ENCODE measurements at regions of chr7 and their contacts with region 1.

Region 1: DNA sequence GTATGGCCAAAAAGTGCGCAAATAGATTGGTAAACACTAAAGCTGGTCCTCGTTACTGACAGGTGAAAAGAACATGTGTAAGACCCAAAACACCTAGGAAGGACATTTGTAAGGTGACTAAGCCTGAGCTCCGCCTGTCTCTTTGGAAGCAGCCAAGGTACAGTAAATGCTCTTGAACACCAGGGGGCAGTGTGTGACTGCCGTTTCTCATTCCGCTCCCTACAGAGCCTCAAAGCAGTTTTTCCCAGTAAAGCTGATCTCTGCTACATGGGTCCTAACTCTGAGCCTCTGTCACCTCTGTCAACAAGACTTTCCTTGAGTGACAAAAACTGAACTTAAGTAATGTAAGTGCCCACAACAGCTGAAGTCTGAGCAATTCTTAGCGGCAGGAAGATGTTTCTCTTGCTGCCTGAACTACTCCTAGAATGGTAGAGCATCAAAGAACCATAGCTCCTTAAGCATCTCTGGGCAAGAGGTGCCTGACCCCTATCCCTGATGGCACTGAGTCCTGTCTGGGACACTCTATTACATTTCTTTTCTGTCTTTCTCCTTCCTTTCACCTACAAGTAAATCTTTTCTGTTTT is 238.0 kb upstream of the INHBA start:
- DNase-seq: peak; percentile 79
- ATAC-seq: peak; percentile 65
- H3K4me3 ChIP-seq: no peak overlapping the region
- H3K27ac ChIP-seq: no peak overlapping the region
- H3K4me1 ChIP-seq: peaks cover 13% of the 10 kb centered on the region
- H3K27me3 ChIP-seq: no peaks in the 10 kb centered on the region
- CTCF ChIP-seq: peak; percentile 87
- POLR2A ChIP-seq: no peak
- RAD21 ChIP-seq: peak; percentile 87

Region 2: DNA sequence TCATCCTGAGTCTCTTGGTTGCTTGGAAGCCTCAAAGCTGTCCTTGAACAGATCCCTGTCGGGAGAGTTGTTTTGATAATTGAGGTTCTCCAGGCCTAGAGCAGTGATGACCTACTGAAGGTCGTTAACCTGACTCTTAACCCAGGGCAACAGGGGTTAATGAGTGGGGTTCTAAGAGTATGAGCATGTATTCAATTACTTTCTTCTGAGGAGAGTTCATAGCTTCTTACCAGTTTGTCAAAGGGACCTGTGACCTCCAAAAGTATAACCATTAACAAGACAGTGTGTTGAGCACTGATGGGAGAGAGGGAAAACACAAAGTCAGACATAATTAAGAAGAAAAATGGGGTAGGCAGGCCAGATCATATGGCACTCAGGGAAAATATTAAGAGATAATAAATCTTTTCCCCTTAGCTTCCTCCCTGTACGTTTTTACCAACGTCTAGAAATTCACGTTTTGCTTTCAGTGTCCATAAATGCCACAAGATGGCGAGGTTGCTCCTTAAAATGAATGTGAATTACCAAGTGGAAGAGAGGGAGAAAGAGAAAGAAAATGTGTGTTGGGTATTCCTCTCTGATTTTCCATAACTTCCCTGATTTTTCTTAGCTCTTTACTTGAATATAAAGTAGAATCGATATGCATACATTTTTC is 1708.5 kb before region 1 on chr7:
- CTCF ChIA-PET with region 1: no interaction called
- POLR2A ChIA-PET with region 1: no interaction called
- dilution Hi-C with region 1: no loop called
- in situ Hi-C with region 1: no loop called
- intact Hi-C with region 1: loop called (anchors 1 kb)
- DNase-seq: peak; percentile 80
- ATAC-seq: peak; percentile 89
- H3K4me3 ChIP-seq: no peak overlapping the region
- H3K27ac ChIP-seq: no peak overlapping the region
- H3K4me1 ChIP-seq: peaks cover 4% of the 10 kb centered on the region; the same call in 1 of the 2 replicates
- H3K27me3 ChIP-seq: no peaks in the 10 kb centered on the region
- CTCF ChIP-seq: peak; percentile 81
- POLR2A ChIP-seq: no peak
- RAD21 ChIP-seq: peak; percentile 84

Region 3: GRCh38 chr7:41755096-41755495 is 185.8 kb before region 1 on chr7:
- CTCF ChIA-PET with region 1: no interaction called
- POLR2A ChIA-PET with region 1: no interaction called
- dilution Hi-C with region 1: no loop called
- in situ Hi-C with region 1: no loop called
- intact Hi-C with region 1: no loop called
- DNase-seq: no peak
- ATAC-seq: no peak
- H3K4me3 ChIP-seq: no peak overlapping the region
- H3K27ac ChIP-seq: no peak overlapping the region
- H3K4me1 ChIP-seq: no peaks in the 10 kb centered on the region
- H3K27me3 ChIP-seq: no peaks in the 10 kb centered on the region
- CTCF ChIP-seq: no peak
- POLR2A ChIP-seq: no peak
- RAD21 ChIP-seq: no peak

Region 4: DNA sequence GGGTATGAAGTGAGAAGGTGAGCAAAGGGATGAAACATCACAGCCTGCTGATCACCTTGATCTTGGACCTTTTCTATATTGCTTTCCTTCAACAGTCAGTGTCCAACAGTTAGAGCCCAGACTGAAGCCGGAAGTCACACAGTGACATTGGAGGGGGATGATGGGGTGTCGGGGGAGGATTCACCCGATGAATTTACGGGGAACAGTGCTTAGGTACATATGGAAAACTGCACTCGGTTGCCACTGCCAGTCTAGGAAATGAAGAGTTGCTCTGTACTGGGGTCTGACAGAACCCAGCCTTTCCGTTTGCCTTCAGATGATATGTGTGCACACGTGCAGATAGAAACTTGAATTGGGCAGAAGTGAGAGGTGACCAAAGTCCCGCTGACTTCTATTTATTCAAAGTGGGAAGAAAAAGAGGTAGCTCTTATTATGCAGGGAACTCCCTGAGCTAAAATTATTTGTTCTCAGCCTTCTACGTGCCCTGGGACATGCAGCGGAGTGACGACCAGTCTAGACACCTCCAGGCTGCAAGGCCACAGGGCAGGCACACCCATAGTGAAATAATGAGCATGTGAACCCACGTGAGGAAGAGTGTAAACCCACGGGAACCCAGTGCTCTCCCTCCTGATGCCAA is 130.8 kb before region 1 on chr7:
- CTCF ChIA-PET with region 1: no interaction called
- POLR2A ChIA-PET with region 1: no interaction called
- dilution Hi-C with region 1: no loop called
- in situ Hi-C with region 1: no loop called
- intact Hi-C with region 1: no loop called
- DNase-seq: no peak
- ATAC-seq: no peak
- H3K4me3 ChIP-seq: no peak overlapping the region
- H3K27ac ChIP-seq: no peak overlapping the region
- H3K4me1 ChIP-seq: no peaks in the 10 kb centered on the region
- H3K27me3 ChIP-seq: no peaks in the 10 kb centered on the region
- CTCF ChIP-seq: no peak
- POLR2A ChIP-seq: no peak
- RAD21 ChIP-seq: no peak

Region 5: GRCh38 chr7:41892356-41893100 is 48.3 kb before region 1 on chr7:
- CTCF ChIA-PET with region 1: no interaction called
- POLR2A ChIA-PET with region 1: no interaction called
- dilution Hi-C with region 1: no loop called
- in situ Hi-C with region 1: no loop called
- intact Hi-C with region 1: no loop called
- DNase-seq: no peak
- ATAC-seq: no peak
- H3K4me3 ChIP-seq: no peak overlapping the region
- H3K27ac ChIP-seq: no peak overlapping the region
- H3K4me1 ChIP-seq: peaks cover 22% of the 10 kb centered on the region
- H3K27me3 ChIP-seq: no peaks in the 10 kb centered on the region
- CTCF ChIP-seq: no peak
- POLR2A ChIP-seq: no peak
- RAD21 ChIP-seq: no peak

Region 6: DNA sequence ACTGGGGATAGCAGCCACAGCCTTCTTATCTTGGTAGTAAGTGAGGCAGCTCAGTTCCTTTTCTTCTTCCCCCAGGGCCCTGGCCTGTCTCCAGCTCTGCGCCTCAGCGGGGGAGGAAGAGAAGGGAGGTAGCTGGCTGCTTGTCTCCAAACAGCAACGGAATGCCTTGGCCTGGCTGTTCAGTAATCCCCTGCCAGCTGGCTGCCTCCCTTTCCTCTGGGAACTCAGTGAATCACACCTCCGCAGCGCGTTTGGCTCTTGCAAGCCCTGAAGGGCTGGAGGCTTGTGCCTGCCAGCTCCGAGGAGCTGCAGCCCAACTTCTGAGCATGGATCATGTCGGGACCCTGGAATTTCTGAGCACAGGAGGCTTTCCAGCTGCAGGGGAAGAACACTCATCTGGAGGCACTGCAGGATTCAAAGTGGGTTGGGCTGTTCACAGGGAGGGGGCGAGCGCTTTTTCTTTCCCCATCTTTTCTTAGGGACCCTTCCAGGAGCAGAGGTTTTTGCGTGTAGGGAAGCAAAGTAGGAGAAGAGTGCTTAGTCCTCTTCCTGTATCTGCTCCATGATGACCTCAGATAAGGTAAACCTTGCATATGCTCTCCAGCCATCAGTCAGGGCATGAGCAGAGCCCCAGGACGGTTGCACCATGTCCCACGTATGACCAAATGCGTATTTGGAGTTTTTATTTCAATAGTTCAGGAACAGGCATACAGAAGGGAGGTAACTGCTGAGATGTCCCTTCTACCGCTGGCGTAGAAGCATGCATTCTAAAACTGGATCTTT is 15.2 kb after region 1 on chr7:
- CTCF ChIA-PET with region 1: interaction called, 13 read pairs
- POLR2A ChIA-PET with region 1: interaction called, 3 read pairs
- dilution Hi-C with region 1: no loop called
- in situ Hi-C with region 1: no loop called
- intact Hi-C with region 1: no loop called
- DNase-seq: peak; percentile 99
- ATAC-seq: peak; percentile 93
- H3K4me3 ChIP-seq: no peak overlapping the region
- H3K27ac ChIP-seq: peak overlapping the region; percentile 47; the same call in 1 of the 2 replicates
- H3K4me1 ChIP-seq: peaks cover 15% of the 10 kb centered on the region
- H3K27me3 ChIP-seq: no peaks in the 10 kb centered on the region
- CTCF ChIP-seq: no peak
- POLR2A ChIP-seq: no peak
- RAD21 ChIP-seq: peak; percentile 21; the same call in 1 of the 2 replicates

Region 7: DNA sequence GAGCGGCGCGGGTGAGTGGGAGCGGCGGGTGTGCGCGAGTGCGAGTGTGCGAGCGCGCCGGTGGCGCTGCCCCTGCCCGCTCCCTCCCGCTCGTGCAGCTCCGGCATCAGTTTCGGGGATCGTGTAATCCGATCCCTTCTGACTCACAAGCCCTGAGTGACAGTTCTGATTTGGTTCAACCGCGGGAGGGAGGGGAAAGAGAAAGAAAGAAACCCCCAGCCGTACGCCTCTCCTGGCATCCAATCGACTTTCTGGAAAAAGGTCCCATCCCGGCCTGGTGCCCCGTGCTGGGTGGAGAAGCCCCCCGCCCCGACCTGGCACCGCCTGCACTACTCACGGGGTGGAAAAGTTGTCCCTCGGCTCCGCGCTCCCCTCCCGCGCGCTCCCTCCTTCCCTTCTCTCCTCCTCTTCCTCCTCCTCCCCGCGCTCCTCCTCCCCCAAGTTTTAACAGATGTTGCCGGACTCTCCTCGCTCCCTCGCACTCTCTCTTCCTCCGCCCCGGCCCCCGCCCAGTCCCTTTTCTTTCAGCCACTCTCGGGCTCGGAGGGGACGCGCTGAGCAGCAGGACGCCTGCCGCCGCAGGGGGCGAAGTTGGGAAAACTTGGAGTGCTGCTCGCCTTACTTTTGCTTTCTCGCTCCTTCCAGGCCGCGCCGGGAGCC is 296.4 kb after region 1 on chr7 and contains the start of gene GLI3:
- CTCF ChIA-PET with region 1: interaction called, 3 read pairs
- POLR2A ChIA-PET with region 1: no interaction called
- dilution Hi-C with region 1: no loop called
- in situ Hi-C with region 1: no loop called
- intact Hi-C with region 1: loop called (anchors 2 kb)
- DNase-seq: peak; percentile 93
- ATAC-seq: peak; percentile 65
- H3K4me3 ChIP-seq: peak within 1 kb of the TSS; percentile 55
- H3K27ac ChIP-seq: peak within 1 kb of the TSS; percentile 90
- H3K4me1 ChIP-seq: peaks cover 9% of the 10 kb centered on the region
- H3K27me3 ChIP-seq: no peaks in the 10 kb centered on the region
- CTCF ChIP-seq: peak; percentile 36; the same call in 1 of the 2 replicates
- POLR2A ChIP-seq: peak; percentile 47
- RAD21 ChIP-seq: no peak
- total RNA-seq, gene GLI3: 1.3 and 1.7 TPM in 2 replicates

Region 8: GRCh38 chr7:42315631-42316030 is 374.8 kb after region 1 on chr7:
- CTCF ChIA-PET with region 1: no interaction called
- POLR2A ChIA-PET with region 1: no interaction called
- dilution Hi-C with region 1: no loop called
- in situ Hi-C with region 1: no loop called
- intact Hi-C with region 1: no loop called
- DNase-seq: peak; percentile 1
- ATAC-seq: peak; percentile 53
- H3K4me3 ChIP-seq: no peak overlapping the region
- H3K27ac ChIP-seq: no peak overlapping the region
- H3K4me1 ChIP-seq: no peaks in the 10 kb centered on the region
- H3K27me3 ChIP-seq: peaks cover 4% of the 10 kb centered on the region
- CTCF ChIP-seq: no peak
- POLR2A ChIP-seq: no peak
- RAD21 ChIP-seq: no peak

Region 9: DNA sequence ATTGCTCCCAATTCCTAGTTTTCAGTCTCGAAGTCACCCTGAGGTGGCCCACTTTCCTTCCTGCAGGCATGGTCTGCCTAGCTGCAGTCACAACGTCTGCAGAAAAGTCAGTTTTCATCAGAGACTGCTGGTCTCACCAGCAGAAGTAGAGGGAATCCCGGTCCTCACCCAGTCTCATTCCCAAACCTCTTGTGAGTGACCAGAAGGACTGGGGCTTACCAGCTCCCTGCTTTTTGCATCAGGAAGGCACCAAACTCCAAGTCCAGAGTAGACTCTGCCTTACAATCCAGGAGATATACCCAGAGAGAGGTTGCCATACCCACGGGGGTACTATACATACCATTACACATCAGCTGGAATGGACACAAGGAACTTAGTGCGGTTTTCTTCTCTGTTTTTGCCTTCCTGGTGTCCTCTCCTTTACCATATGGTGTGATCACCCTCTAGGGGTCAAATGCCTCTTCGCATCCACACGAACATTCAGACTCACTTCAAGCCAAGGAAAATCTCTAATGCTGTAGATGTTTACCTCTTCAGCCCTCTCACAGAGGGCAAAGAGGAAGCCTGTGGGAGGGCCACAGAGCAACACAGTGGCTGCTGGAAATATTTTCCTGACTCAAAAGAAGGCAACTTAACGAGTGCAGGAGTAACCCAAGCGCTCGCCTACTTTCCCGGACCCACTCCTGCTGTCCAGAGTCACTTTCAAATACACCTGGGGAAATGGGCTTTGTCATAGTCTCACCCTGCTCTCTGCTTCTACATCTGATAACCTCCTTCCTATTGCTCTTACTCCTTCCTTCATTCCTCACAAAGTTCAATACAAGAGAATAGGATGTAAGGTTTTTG is 750.2 kb after region 1 on chr7:
- CTCF ChIA-PET with region 1: interaction called, 4 read pairs
- POLR2A ChIA-PET with region 1: no interaction called
- dilution Hi-C with region 1: no loop called
- in situ Hi-C with region 1: loop called (anchors 10 kb)
- intact Hi-C with region 1: loop called (anchors 1 kb)
- DNase-seq: peak; percentile 39
- ATAC-seq: peak; percentile 84
- H3K4me3 ChIP-seq: no peak overlapping the region
- H3K27ac ChIP-seq: no peak overlapping the region
- H3K4me1 ChIP-seq: no peaks in the 10 kb centered on the region
- H3K27me3 ChIP-seq: no peaks in the 10 kb centered on the region; the same call in 1 of the 2 replicates
- CTCF ChIP-seq: peak; percentile 48
- POLR2A ChIP-seq: no peak
- RAD21 ChIP-seq: peak; percentile 58

Region 10: GRCh38 chr7:42843205-42843800 is 902.5 kb after region 1 on chr7:
- CTCF ChIA-PET with region 1: interaction called, 8 read pairs
- POLR2A ChIA-PET with region 1: no interaction called
- dilution Hi-C with region 1: no loop called
- in situ Hi-C with region 1: no loop called
- intact Hi-C with region 1: loop called (anchors 1 kb)
- DNase-seq: peak; percentile 31
- ATAC-seq: peak; percentile 97
- H3K4me3 ChIP-seq: no peak overlapping the region
- H3K27ac ChIP-seq: no peak overlapping the region
- H3K4me1 ChIP-seq: no peaks in the 10 kb centered on the region
- H3K27me3 ChIP-seq: peaks cover 24% of the 10 kb centered on the region
- CTCF ChIP-seq: peak; percentile 59
- POLR2A ChIP-seq: no peak
- RAD21 ChIP-seq: peak; percentile 67

Region 11: GRCh38 chr7:42886129-42886528 is 945.3 kb after region 1 on chr7:
- CTCF ChIA-PET with region 1: interaction called, 6 read pairs
- POLR2A ChIA-PET with region 1: no interaction called
- dilution Hi-C with region 1: no loop called
- in situ Hi-C with region 1: loop called (anchors 10 kb)
- intact Hi-C with region 1: no loop called
- DNase-seq: no peak
- ATAC-seq: no peak
- H3K4me3 ChIP-seq: no peak overlapping the region
- H3K27ac ChIP-seq: no peak overlapping the region
- H3K4me1 ChIP-seq: peaks cover 6% of the 10 kb centered on the region; the same call in 1 of the 2 replicates
- H3K27me3 ChIP-seq: no peaks in the 10 kb centered on the region
- CTCF ChIP-seq: peak; percentile 36; the same call in 1 of the 2 replicates
- POLR2A ChIP-seq: no peak
- RAD21 ChIP-seq: peak; percentile 25; the same call in 1 of the 2 replicates